GM10248 (cell line): ENCODE measurements at regions of chr9 and their contacts with region 1.

Region 1: DNA sequence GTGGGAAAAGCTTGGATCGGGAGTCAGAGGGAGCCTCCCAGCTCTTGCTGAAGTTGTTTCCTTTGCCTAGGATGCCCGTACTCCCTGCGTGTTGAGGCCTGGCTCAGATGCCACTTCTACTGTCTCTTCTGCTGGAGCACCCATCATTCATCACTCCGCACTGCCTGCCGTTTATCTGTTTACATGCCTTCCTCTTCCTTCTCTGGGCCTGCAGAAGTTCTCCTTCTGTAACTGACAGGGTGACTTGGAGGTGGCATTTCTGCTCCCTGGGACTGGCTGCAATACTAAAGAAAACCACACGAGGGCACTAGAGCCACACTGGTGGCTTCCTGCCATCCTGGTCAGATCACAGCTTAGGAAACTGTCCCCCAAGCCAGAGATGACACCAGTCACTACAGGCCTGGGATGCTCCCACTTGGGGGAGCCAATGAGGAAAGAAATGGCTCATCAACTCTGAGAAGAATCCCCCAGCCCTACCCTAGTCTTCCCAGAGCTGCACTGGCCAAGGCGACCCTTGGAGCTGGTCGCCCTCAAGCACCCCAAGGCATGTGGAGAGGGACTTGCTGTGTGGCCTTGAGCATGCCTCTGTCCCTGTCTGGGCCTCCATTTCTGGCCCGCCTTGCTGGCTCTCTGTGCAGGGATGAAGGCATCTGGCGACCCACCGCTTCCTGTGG is 9.7 kb upstream of the SLC25A51 start:
- DNase-seq: peak; percentile 85
- CTCF ChIP-seq: peak; percentile 94

Region 2: GRCh38 chr9:37693260-37693659 is 220.4 kb before region 1 on chr9:
- CTCF ChIA-PET with region 1: no interaction called
- POLR2A ChIA-PET with region 1: no interaction called
- DNase-seq: no peak
- CTCF ChIP-seq: no peak

Region 3: DNA sequence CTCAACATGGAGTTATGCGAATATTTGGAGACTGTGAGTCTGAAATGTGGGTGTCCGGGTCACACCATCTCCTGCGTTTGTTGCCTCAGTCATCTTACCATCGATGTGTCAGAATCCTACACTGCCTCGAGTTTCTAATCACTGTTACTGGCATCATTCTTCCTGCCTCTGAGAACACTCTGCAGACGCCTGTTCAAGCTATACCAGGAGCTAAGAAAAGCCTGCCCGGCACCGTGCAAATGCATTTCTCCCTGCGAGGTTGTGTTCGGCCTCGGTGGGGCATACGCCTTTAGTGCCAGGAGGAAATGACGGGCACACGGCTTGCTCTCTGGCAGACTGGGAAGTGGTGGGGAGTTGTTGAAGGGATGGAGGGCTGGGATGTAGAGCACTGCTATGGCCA is 21.5 kb after region 1 on chr9:
- CTCF ChIA-PET with region 1: interaction called, 13 read pairs
- POLR2A ChIA-PET with region 1: no interaction called
- DNase-seq: no peak
- CTCF ChIP-seq: no peak

Region 4: GRCh38 chr9:38061326-38061977 is 147.8 kb after region 1 on chr9:
- CTCF ChIA-PET with region 1: interaction called, 10 read pairs
- POLR2A ChIA-PET with region 1: no interaction called
- DNase-seq: peak; percentile 64
- CTCF ChIP-seq: no peak

Region 5: GRCh38 chr9:38160613-38161215 is 247.1 kb after region 1 on chr9:
- CTCF ChIA-PET with region 1: interaction called, 30 read pairs
- POLR2A ChIA-PET with region 1: no interaction called
- DNase-seq: peak; percentile 69
- CTCF ChIP-seq: peak; percentile 86

Region 6: DNA sequence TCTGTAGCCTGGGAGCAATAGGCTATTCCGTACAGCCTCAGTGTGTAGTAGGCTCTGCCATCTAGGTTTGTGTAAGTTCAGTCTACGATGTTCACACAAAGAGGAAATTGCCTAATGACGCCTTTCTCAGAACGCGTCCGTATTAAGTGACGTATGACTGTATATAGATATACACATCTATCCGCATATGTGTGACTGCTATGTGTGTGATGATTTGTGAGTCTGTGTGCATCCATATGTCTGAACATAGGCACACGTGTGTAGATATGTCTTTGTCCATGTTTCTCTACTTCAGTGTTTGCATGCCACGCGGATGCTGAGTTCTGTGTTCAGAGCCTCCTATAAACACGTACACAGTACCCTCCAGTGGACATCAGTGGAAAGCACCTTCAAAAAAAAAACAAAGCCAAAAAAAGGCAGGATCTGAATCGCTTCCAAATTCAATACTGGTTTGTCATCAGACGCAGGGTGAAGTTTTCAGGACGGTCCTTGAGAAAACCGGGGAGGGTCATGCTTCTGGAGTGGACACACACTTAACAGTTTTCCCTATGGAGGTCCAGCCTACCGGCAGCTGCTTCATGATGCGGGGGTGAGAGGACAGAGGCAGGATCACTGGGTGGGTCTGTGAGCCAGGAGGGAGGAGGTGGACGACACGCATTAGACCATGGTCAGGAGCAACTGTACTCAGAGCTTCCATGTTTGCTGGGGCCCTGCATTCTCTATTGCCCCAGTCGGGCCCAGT is 449.4 kb after region 1 on chr9:
- CTCF ChIA-PET with region 1: interaction called, 21 read pairs
- POLR2A ChIA-PET with region 1: no interaction called
- DNase-seq: peak; percentile 58
- CTCF ChIP-seq: peak; percentile 64

Region 7: GRCh38 chr9:38395653-38396370 is 482.2 kb after region 1 on chr9:
- CTCF ChIA-PET with region 1: interaction called, 10 read pairs
- POLR2A ChIA-PET with region 1: interaction called, 3 read pairs
- DNase-seq: no peak
- CTCF ChIP-seq: no peak

Region 8: GRCh38 chr9:38432922-38433510 is 519.4 kb after region 1 on chr9:
- CTCF ChIA-PET with region 1: interaction called, 38 read pairs
- POLR2A ChIA-PET with region 1: no interaction called
- DNase-seq: no peak
- CTCF ChIP-seq: peak; percentile 59